A673 (cell line): ENCODE measurements at regions of chr22 and their contacts with region 1.

Region 1: GRCh38 chr22:31272522-31273446 is 19.5 kb downstream of the PIK3IP1 start:
- DNase-seq: peak; percentile 74
- H3K4me3 ChIP-seq: no peak overlapping the region
- H3K27ac ChIP-seq: no peak overlapping the region
- H3K4me1 ChIP-seq: no peaks in the 10 kb centered on the region
- H3K27me3 ChIP-seq: no peaks in the 10 kb centered on the region
- CTCF ChIP-seq: peak; percentile 75

Region 2: GRCh38 chr22:31107178-31107893 is 165.4 kb before region 1 on chr22 and contains the start of gene SELENOM:
- CTCF ChIA-PET with region 1: interaction called, 7 read pairs
- POLR2A ChIA-PET with region 1: no interaction called
- intact Hi-C with region 1: loop called (anchors 5 kb)
- DNase-seq: peak; percentile 94
- H3K4me3 ChIP-seq: peak within 1 kb of the TSS; percentile 57
- H3K27ac ChIP-seq: peak within 1 kb of the TSS; percentile 14
- H3K4me1 ChIP-seq: peaks cover 4% of the 10 kb centered on the region
- H3K27me3 ChIP-seq: no peaks in the 10 kb centered on the region
- CTCF ChIP-seq: peak; percentile 98
- total RNA-seq, gene SELENOM: 3.2 and 5.0 TPM in 2 replicates

Region 3: DNA sequence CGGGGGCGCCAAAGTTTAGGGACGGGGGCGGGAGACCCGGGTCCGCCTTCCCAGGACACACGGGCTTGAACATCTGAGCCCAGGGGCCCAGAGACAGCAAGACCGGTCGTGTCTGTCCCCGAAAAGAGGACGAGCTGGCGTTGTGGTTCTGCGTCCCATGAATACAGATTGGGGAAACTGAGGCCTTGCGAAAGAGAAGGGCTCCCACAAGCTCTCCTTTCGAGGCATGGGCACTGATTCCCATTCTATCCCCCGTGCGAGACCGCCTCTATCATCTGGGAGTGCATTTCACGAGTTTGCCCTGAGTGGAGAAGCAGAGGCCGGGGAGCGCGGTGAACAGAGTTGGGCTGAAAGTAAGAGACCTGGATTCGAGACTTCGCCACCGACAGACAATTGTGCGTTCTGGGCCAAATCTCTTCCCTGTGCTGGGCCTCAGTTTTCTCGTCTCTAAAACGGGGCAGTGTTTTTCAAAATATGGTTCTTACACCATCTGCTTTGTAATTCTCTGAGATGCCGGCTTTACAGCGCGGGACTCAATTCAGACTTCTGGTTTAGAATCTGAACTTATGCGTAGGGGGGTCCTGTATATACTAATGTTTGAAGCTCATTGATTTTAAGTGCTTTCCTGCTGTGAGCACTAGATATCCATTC is 112.3 kb before region 1 on chr22:
- CTCF ChIA-PET with region 1: interaction called, 10 read pairs
- POLR2A ChIA-PET with region 1: no interaction called
- intact Hi-C with region 1: no loop called
- DNase-seq: peak; percentile 34
- H3K4me3 ChIP-seq: peak overlapping the region; percentile 86
- H3K27ac ChIP-seq: peak overlapping the region; percentile 80
- H3K4me1 ChIP-seq: peaks cover 10% of the 10 kb centered on the region
- H3K27me3 ChIP-seq: no peaks in the 10 kb centered on the region
- CTCF ChIP-seq: no peak

Region 4: DNA sequence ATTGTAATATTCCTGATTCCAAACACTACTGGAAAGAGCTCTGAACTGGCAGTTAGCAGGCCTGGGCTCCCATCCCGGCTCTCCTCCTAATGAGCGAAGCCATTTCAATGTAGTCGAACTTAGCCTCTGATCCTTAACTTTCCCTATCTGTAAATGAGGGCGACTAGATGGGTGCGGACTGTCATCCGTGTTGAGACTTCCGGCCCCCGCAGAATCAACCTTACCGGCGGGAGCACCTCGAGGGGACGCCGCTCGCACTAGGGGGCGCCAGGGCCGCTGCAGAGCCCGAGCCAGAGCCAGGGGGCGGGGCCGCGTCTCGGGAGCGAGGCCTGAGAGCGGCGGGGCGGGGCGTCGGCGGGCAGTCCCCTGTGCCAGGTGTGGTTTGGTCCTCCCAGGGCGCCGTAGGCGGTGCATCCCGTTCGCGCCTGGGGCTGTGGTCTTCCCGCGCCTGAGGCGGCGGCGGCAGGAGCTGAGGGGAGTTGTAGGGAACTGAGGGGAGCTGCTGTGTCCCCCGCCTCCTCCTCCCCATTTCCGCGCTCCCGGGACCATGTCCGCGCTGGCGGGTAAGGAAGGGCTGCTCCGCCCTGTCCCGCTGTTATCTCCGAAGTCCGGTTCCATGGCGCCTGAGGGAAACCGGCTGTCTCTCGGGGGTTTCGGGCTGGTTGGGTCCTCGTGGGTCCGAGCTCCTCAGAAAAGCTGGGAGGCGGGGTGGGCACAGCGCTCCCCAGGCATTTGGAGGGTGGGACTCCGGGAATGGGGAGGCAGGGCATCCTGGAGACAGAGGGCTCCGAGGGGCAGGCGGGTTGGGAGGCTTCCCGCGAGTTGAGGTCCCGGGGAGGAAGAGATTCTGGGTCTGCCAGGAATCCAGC is 60.7 kb before region 1 on chr22 and contains the start of gene LIMK2:
- CTCF ChIA-PET with region 1: interaction called, 18 read pairs
- POLR2A ChIA-PET with region 1: no interaction called
- intact Hi-C with region 1: loop called (anchors 2 kb)
- DNase-seq: peak; percentile 94
- H3K4me3 ChIP-seq: peak within 1 kb of the TSS; percentile 62
- H3K27ac ChIP-seq: peak within 1 kb of the TSS; percentile 47
- H3K4me1 ChIP-seq: peaks cover 16% of the 10 kb centered on the region
- H3K27me3 ChIP-seq: no peaks in the 10 kb centered on the region
- CTCF ChIP-seq: peak; percentile 84
- total RNA-seq, gene LIMK2: 27.9 and 33.4 TPM in 2 replicates

Region 5: DNA sequence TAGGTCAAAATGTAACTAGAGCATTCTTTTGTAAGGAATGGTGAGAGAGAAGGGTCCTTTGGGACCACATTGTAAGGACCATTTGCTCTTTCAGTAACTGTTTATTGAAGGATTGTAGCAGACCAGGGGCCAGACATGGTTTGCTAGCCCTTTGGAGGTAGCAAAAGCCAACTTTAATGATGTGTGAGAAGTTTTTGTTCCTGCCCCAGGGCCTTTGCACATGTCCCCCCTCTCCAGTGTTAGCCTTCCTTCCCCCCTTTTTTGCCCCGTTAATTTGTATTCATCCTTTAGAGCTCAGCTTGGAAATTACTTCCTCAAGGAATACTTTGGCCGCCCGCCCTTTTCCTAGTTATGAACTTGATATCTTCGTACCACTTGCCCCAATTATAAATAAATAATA is 51.7 kb before region 1 on chr22:
- CTCF ChIA-PET with region 1: interaction called, 10 read pairs
- POLR2A ChIA-PET with region 1: no interaction called
- intact Hi-C with region 1: no loop called
- DNase-seq: no peak
- H3K4me3 ChIP-seq: no peak overlapping the region
- H3K27ac ChIP-seq: no peak overlapping the region
- H3K4me1 ChIP-seq: peaks cover 4% of the 10 kb centered on the region
- H3K27me3 ChIP-seq: no peaks in the 10 kb centered on the region
- CTCF ChIP-seq: no peak

Region 6: GRCh38 chr22:31692186-31692886 is 419.6 kb after region 1 on chr22:
- CTCF ChIA-PET with region 1: no interaction called
- POLR2A ChIA-PET with region 1: no interaction called
- intact Hi-C with region 1: no loop called
- DNase-seq: no peak
- H3K4me3 ChIP-seq: no peak overlapping the region
- H3K27ac ChIP-seq: no peak overlapping the region
- H3K4me1 ChIP-seq: no peaks in the 10 kb centered on the region
- H3K27me3 ChIP-seq: no peaks in the 10 kb centered on the region
- CTCF ChIP-seq: no peak

Region 7: DNA sequence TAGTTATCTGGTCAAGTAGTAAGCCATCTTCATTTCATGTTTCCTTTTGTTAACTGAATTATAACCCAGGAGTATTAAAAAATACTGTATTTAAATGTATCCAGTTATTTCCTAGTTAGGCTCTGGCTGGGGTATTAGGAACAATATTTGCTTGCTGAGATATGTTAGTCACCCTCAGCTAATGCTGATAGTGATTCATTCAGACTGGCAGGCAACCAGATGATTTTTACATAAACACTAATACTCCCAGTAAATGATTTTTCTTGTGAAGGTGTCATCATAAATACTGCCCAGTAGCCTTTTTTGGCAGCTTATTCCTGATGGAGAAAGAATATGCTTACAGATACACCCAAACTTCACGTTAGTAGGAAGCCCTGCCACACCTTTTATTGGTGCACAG is 679.7 kb after region 1 on chr22:
- CTCF ChIA-PET with region 1: no interaction called
- POLR2A ChIA-PET with region 1: interaction called, 15 read pairs
- intact Hi-C with region 1: no loop called
- DNase-seq: no peak
- H3K4me3 ChIP-seq: no peak overlapping the region
- H3K27ac ChIP-seq: no peak overlapping the region
- H3K4me1 ChIP-seq: peaks cover 19% of the 10 kb centered on the region
- H3K27me3 ChIP-seq: no peaks in the 10 kb centered on the region
- CTCF ChIP-seq: no peak; the same call in 1 of the 2 replicates